ENCODE measurements at regions of chr5 and their contacts with region 1.

Region 1: DNA sequence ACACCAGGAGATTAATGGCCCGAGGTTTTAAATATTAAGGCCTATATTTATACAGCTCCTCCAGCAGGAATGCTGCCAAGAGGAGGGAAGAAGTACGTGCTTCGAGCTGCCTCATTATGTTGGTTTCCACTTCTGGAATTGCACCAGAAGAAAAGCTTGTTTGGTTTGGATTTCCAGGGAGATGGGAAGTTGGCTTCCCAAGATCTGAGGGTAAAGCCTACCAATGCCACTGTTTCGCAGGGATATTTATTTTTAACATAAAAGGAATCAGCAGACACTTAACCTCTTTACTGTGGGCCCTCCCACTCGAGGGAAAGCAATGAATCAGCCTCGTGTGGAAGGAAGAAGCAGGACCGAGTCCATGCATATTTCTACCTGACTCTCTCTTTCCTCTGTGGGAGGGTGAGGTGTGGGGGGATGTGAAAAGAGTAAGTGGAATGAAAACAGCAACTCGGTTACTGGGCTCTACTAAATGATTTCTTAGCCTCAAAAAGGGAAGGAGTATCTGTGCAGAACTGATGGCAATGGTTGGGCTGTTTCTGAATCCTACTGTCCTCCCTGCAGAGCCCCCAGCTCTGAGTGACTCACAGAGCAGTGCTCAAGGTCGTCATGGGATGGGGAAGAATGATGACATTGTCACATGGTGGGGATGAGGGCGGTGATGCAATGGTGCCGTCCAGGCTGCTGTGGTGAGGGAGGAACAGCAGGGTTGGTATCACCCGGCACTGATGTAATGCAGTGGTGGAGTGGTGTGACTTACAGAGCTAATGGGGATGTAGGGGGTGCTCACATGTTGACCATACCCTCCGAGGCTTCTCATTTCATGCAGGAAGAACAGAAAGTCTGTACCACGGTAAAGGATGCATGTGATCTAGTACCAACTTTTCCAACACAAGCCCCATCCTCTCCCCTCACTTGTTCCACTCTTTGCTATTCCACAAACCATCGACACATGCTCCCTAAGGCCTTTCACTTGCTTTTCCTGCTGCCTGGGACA is 215.0 kb upstream of the PANK3 start:
- DNase-seq: no peak
- H3K4me3 Mint-ChIP-seq: no peak overlapping the region
- H3K27ac Mint-ChIP-seq: peak overlapping the region; percentile 82
- H3K4me1 Mint-ChIP-seq: peaks cover 32% of the 10 kb centered on the region
- H3K27me3 Mint-ChIP-seq: no peaks in the 10 kb centered on the region

Region 2: GRCh38 chr5:168822745-168823281 is 28.7 kb after region 1 on chr5:
- intact Hi-C with region 1: loop called (anchors 1 kb)
- DNase-seq: no peak
- H3K4me3 Mint-ChIP-seq: peak overlapping the region; percentile 21
- H3K27ac Mint-ChIP-seq: peak overlapping the region; percentile 92
- H3K4me1 Mint-ChIP-seq: peaks cover 12% of the 10 kb centered on the region
- H3K27me3 Mint-ChIP-seq: peaks cover 4% of the 10 kb centered on the region

Region 3: DNA sequence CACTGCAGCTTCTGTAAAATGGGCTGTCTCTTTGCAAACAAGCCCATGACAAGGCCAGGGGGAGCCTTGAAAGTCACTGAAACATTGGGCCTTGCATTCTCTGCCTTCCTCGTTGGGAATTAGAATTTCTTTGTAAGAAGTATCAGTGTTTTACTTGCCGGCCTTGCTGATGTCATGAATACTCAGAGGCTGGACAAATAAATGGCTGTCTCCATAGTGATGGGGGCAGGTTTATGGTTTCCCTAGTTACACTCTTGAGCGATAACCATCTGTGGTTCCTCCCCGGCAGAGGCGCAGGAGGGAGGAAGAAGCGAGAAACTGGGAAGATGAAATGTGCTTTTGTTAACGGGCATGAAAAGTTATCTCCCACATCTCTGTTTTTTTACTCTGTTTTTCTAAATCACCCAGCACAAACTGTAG is 57.8 kb after region 1 on chr5:
- intact Hi-C with region 1: loop called (anchors 1 kb)
- DNase-seq: peak; percentile 82
- H3K4me3 Mint-ChIP-seq: peak overlapping the region; percentile 64
- H3K27ac Mint-ChIP-seq: peak overlapping the region; percentile 84
- H3K4me1 Mint-ChIP-seq: peaks cover 19% of the 10 kb centered on the region
- H3K27me3 Mint-ChIP-seq: peaks cover 20% of the 10 kb centered on the region

Region 4: DNA sequence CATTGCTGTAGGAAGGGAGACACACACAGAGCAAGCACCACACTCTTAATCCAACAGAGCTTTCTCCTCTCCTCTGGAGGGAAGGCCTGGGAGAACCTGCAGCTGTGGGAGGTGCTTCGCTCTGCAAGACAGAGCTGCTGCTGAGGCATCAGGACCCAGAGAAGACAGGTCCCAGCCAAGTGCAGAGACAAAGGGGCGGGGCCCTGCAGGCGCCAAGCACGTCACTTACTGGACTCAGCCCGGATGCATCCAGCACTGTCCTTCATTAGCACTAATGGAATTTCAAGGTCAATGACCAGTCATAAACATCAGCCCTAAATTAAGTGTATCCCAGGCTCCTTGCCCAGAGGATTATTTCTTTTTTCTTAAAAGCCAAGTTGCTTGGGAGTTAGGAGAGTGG is 122.1 kb after region 1 on chr5:
- intact Hi-C with region 1: no loop called
- DNase-seq: no peak
- H3K4me3 Mint-ChIP-seq: no peak overlapping the region
- H3K27ac Mint-ChIP-seq: no peak overlapping the region
- H3K4me1 Mint-ChIP-seq: no peaks in the 10 kb centered on the region
- H3K27me3 Mint-ChIP-seq: peaks cover 41% of the 10 kb centered on the region

Measured in activated CD4-positive, alpha-beta T cell treated with anti-CD3 and anti-CD28 coated beads, Interleukin-2, amount 10 ng/mL, durations not matched to agents 24 days and 14 days (primary cell).